GM12878 (cell line): ENCODE measurements at regions of chr5 and their contacts with region 1.

Region 1: DNA sequence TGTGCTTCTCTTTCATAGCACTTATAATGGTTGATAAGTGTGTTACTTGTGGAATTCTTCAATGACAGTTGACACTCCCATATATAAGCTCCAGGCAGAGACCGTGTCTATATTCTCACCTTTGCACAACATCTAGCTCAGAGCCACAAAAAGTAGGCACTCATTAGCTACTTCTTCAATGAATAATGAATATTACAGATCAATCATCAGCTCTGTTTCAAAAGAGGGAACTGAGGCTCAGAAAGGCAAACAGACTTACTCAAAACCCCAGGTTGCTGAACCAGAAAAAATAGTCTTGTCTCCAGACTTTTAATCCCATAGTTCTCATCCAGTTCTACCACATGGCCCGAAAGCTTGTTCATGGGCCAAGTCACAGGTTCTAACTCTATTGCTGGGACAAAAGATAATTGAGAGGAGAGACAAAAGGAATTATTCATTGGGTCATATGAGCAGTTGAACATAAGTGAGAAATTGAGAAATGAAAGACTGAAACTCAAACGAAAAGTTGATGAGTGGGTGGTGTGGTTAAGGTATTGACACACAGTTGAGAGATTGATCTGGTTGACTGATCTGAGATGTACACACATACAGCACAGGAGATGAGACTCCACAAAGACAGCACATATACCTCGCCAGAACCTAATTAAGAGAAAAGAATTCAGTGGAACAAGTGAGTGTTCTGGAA is 381.6 kb downstream of the EFNA5 start:
- DNase-seq: peak; percentile 91
- ATAC-seq: peak; percentile 94
- H3K4me3 ChIP-seq: no peak overlapping the region
- H3K27ac ChIP-seq: peak overlapping the region; percentile 14; the same call in 1 of the 2 replicates
- H3K4me1 ChIP-seq: peaks cover 23% of the 10 kb centered on the region
- H3K27me3 ChIP-seq: no peaks in the 10 kb centered on the region; a peak in 1 of 4 replicates
- CTCF ChIP-seq: no peak
- EP300 ChIP-seq: peak; percentile 92 to 95
- POLR2A ChIP-seq: no peak
- RAD21 ChIP-seq: no peak

Region 2: DNA sequence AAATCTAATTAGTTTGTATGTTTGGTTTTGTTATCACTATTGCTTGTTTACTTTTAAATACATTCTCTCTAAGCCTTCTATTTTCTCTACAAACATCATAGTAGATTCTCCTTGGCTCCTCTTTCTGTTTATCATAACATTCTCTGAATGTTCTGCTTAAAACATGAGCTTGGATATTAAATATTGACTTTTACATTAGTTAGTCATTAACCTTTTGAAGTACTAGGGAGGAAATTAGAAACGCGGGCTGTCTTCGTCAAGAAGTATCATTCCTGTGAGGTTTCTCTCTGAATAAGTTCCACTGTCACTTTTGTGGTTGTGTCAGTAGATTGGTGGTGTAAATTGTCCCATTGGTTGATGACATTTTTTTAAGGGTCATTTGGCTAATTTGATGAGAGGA is 439.9 kb before region 1 on chr5:
- CTCF ChIA-PET with region 1: no interaction called
- POLR2A ChIA-PET with region 1: no interaction called
- RAD21 ChIA-PET with region 1: no interaction called
- SMC1A ChIA-PET with region 1: no interaction called
- in situ Hi-C with region 1: no loop called
- intact Hi-C with region 1: no loop called
- DNase-seq: no peak
- ATAC-seq: no peak
- H3K4me3 ChIP-seq: no peak overlapping the region
- H3K27ac ChIP-seq: no peak overlapping the region
- H3K4me1 ChIP-seq: no peaks in the 10 kb centered on the region
- H3K27me3 ChIP-seq: no peaks in the 10 kb centered on the region
- CTCF ChIP-seq: no peak
- EP300 ChIP-seq: no peak
- POLR2A ChIP-seq: no peak
- RAD21 ChIP-seq: no peak

Region 3: DNA sequence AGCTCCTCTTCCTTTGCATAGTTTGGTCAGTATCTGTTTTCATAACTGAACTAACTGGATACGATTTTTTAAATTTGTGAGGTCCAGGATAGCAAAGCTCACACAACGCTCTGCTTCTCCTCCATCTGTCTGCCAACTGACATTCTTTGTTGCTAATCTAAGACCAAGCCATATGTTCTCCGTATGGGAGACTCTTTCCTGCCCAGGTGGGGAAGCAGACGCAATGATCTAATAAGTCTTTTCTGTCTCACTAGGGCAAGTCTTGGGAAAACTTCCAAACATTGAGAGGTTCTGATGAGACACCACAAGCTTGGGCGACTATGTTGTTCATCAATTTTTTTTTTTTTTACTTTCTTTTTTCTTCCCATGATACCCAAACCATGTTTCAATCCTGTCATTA is 177.0 kb before region 1 on chr5:
- CTCF ChIA-PET with region 1: no interaction called
- POLR2A ChIA-PET with region 1: no interaction called
- RAD21 ChIA-PET with region 1: no interaction called
- SMC1A ChIA-PET with region 1: no interaction called
- in situ Hi-C with region 1: no loop called
- intact Hi-C with region 1: no loop called
- DNase-seq: no peak
- ATAC-seq: no peak
- H3K4me3 ChIP-seq: no peak overlapping the region
- H3K27ac ChIP-seq: no peak overlapping the region
- H3K4me1 ChIP-seq: no peaks in the 10 kb centered on the region
- H3K27me3 ChIP-seq: no peaks in the 10 kb centered on the region; a peak in 1 of 4 replicates
- CTCF ChIP-seq: no peak
- EP300 ChIP-seq: no peak
- POLR2A ChIP-seq: no peak
- RAD21 ChIP-seq: no peak

Region 4: GRCh38 chr5:107263387-107264018 is 25.7 kb before region 1 on chr5:
- CTCF ChIA-PET with region 1: interaction called, 8 read pairs
- POLR2A ChIA-PET with region 1: interaction called, 6 read pairs
- RAD21 ChIA-PET with region 1: interaction called, 20 read pairs
- SMC1A ChIA-PET with region 1: interaction called, 23 read pairs
- in situ Hi-C with region 1: no loop called
- intact Hi-C with region 1: loop called (anchors 2 kb)
- DNase-seq: peak; percentile 73
- ATAC-seq: peak; percentile 87
- H3K4me3 ChIP-seq: no peak overlapping the region; the same call in 1 of the 2 replicates
- H3K27ac ChIP-seq: no peak overlapping the region
- H3K4me1 ChIP-seq: peaks cover 15% of the 10 kb centered on the region; the same call in 1 of the 2 replicates
- H3K27me3 ChIP-seq: no peaks in the 10 kb centered on the region
- CTCF ChIP-seq: no peak
- EP300 ChIP-seq: peak in 1 of 2 experiments; percentile 65; a peak in 1 of 4 replicates
- POLR2A ChIP-seq: no peak
- RAD21 ChIP-seq: no peak

Region 5: GRCh38 chr5:107300721-107301327 is 11.7 kb after region 1 on chr5:
- CTCF ChIA-PET with region 1: interaction called, 7 read pairs
- POLR2A ChIA-PET with region 1: interaction called, 5 read pairs
- RAD21 ChIA-PET with region 1: interaction called, 5 read pairs
- SMC1A ChIA-PET with region 1: interaction called, 19 read pairs
- in situ Hi-C with region 1: no loop called
- intact Hi-C with region 1: no loop called
- DNase-seq: no peak
- ATAC-seq: no peak
- H3K4me3 ChIP-seq: no peak overlapping the region
- H3K27ac ChIP-seq: no peak overlapping the region
- H3K4me1 ChIP-seq: no peaks in the 10 kb centered on the region
- H3K27me3 ChIP-seq: no peaks in the 10 kb centered on the region
- CTCF ChIP-seq: no peak
- EP300 ChIP-seq: no peak
- POLR2A ChIP-seq: no peak
- RAD21 ChIP-seq: no peak

Region 6: GRCh38 chr5:107359033-107359915 is 70.1 kb after region 1 on chr5:
- CTCF ChIA-PET with region 1: interaction called, 3 read pairs
- POLR2A ChIA-PET with region 1: no interaction called
- RAD21 ChIA-PET with region 1: interaction called, 12 read pairs
- SMC1A ChIA-PET with region 1: interaction called, 16 read pairs
- in situ Hi-C with region 1: no loop called
- intact Hi-C with region 1: loop called (anchors 2 kb)
- DNase-seq: no peak
- ATAC-seq: no peak; the same call in 2 of the 3 replicates
- H3K4me3 ChIP-seq: no peak overlapping the region
- H3K27ac ChIP-seq: no peak overlapping the region
- H3K4me1 ChIP-seq: peaks cover 6% of the 10 kb centered on the region; the same call in 1 of the 2 replicates
- H3K27me3 ChIP-seq: no peaks in the 10 kb centered on the region; a peak in 1 of 4 replicates
- CTCF ChIP-seq: no peak
- EP300 ChIP-seq: no peak
- POLR2A ChIP-seq: no peak
- RAD21 ChIP-seq: no peak

Region 7: DNA sequence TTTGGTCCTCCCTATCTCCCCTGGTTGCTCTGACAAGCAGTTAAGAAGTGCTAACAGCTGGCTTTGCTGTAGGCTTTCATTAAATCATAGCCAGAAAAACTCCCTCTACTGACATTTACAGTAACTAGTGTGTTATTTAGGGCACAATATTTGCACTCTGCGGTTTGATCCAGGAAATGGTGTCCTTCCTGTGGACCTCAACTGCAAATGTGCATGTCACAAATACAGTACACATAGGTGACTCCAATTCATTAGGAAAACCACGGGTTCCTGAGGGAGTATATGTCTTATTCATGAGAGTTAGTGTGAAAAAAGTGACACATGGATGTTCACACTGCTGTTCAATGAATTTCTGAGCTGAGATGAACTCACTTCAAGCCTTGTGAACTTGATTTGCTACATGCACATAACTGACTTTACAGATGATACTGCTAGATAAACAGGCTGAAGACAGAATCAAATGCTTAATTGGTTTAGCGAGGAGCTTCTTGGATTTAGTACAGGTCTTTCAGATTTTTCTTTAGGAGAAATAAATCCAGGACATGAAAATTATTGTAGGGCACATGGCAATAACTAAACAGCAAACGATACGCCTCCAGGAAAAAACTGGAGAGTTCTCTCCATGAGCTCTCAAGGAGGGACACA is 100.1 kb after region 1 on chr5:
- CTCF ChIA-PET with region 1: interaction called, 3 read pairs
- POLR2A ChIA-PET with region 1: interaction called, 3 read pairs
- RAD21 ChIA-PET with region 1: interaction called, 16 read pairs
- SMC1A ChIA-PET with region 1: interaction called, 7 read pairs
- in situ Hi-C with region 1: no loop called
- intact Hi-C with region 1: loop called (anchors 1 kb)
- DNase-seq: peak; percentile 92
- ATAC-seq: peak; percentile 82
- H3K4me3 ChIP-seq: peak overlapping the region; percentile 43
- H3K27ac ChIP-seq: peak overlapping the region; percentile 69
- H3K4me1 ChIP-seq: peaks cover 22% of the 10 kb centered on the region
- H3K27me3 ChIP-seq: no peaks in the 10 kb centered on the region
- CTCF ChIP-seq: peak in 1 of 3 experiments; percentile 27; a peak in 1 of 6 replicates
- EP300 ChIP-seq: peak; percentile 89 to 90; a peak in 2 of 4 replicates
- POLR2A ChIP-seq: no peak
- RAD21 ChIP-seq: peak; percentile 50